GM12878 (cell line): ENCODE measurements at regions of chr10 and their contacts with region 1.

Region 1: DNA sequence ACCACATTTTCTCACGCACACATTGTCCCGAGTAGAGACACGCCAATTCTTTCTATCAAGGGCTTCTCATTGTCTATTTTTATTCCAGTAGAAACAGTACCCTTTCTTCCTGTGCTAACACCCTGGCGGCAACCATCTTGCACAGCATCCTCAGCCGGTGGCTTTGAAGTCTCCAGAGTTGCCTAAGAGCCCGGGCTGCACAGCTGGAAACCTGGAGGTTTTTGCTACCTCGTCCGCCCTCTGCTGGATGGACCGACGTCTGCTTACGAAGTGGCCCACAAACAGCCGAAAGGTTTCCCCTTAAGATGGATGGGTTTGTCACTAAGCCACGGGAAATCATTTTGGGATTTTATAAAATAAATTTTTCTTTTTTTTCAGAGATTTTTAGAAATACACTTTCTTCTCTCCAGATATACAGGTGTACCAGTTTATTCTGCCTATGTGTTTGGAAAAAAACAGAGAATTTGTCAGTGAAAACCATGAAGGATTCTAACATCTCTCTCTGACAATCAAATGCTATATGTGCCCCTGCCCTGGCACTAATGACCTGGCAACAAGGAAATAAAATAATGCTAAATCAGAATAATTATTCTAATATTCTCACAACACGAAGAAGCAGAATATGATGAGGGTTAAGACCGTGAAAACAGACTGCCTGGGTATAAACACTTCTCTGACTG is 81.8 kb upstream of the FAM204A start:
- DNase-seq: no peak
- ATAC-seq: peak; percentile 96
- H3K4me3 ChIP-seq: no peak overlapping the region
- H3K27ac ChIP-seq: no peak overlapping the region
- H3K4me1 ChIP-seq: no peaks in the 10 kb centered on the region
- H3K27me3 ChIP-seq: no peaks in the 10 kb centered on the region
- CTCF ChIP-seq: peak; percentile 67 to 77 (median 77)
- EP300 ChIP-seq: no peak
- POLR2A ChIP-seq: no peak
- RAD21 ChIP-seq: peak; percentile 60

Region 2: DNA sequence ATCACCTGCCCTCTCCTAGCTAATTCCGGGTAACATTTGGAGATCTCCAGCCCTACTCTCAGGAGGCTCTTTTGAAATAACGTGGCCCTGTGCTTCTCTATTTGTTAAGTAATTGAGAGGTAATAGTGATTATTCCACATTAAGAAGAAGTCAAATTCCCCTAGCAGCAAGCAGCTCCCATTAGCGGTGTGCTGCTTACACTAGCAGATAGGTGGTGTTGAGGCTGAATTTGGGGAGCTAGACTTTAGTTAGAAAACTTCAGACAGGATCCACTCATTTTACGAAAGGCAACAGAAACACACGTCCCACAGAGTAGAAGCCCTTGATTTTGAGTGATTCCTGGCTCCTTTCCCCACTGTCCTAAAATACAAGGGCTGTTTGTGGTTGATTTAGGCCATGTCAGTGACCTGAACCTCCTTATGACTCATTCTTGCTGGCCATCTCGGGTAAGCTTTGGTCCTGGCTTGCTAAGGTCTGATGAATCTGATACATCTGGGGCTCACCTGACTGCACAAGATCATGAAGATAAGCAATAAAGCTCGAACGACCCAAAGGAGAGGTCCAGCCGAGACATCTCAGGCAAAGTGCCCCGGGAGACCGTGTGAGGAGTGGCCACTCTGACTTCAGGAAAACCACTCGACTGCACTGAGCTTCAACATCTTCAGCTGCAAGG is 159.0 kb before region 1 on chr10:
- CTCF ChIA-PET with region 1: no interaction called
- POLR2A ChIA-PET with region 1: no interaction called
- RAD21 ChIA-PET with region 1: no interaction called
- SMC1A ChIA-PET with region 1: no interaction called
- in situ Hi-C with region 1: no loop called
- intact Hi-C with region 1: loop called (anchors 10 kb)
- DNase-seq: no peak
- ATAC-seq: no peak
- H3K4me3 ChIP-seq: no peak overlapping the region
- H3K27ac ChIP-seq: no peak overlapping the region
- H3K4me1 ChIP-seq: no peaks in the 10 kb centered on the region
- H3K27me3 ChIP-seq: no peaks in the 10 kb centered on the region; a peak in 1 of 4 replicates
- CTCF ChIP-seq: no peak
- EP300 ChIP-seq: no peak
- POLR2A ChIP-seq: no peak
- RAD21 ChIP-seq: no peak